CD14-positive monocyte (primary cell): ENCODE measurements at regions of chr12 and their contacts with region 1.

Region 1: DNA sequence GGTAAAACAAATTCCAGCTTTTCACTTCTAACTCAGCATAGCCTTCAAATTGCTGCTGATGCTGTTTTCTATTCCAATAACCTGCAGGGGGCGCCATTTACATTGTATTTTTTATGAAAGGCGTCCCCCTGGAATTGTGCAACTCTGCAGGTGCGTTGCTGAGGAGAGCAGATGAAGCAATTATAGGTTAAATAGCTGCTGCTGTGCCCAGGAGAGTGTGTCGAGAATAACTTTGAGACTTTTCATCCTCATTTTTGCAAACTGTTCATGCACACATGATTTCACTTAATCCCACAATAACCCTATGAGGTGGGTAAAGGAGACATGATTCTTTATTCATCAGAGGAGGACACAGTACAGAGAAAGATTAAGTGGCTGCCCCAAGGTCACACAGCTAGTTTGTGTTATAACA is 75.7 kb downstream of the MYRFL start:
- DNase-seq: peak; percentile 41 to 61 (median 53)
- H3K4me3 ChIP-seq: no peak overlapping the region
- H3K4me3 Mint-ChIP-seq: no peak overlapping the region
- H3K27ac ChIP-seq: no peak overlapping the region
- H3K27ac Mint-ChIP-seq: peak overlapping the region in 1 of 7 donors; percentile 55
- H3K4me1 ChIP-seq: peaks cover 6 to 9% of the 10 kb centered on the region in 2 donors
- H3K4me1 Mint-ChIP-seq: peaks cover 6% of the 10 kb centered on the region
- H3K27me3 ChIP-seq: no peaks in the 10 kb centered on the region
- H3K27me3 Mint-ChIP-seq: peaks cover 0 to 2% (median 0%) of the 10 kb centered on the region in 3 donors
- CTCF ChIP-seq: peak; percentile 97

Region 2: GRCh38 chr12:70070494-70071007 is 169.8 kb after region 1 on chr12:
- intact Hi-C with region 1: loop called in 1 of 2 experiments (anchors 10 kb)
- DNase-seq: no peak
- H3K4me3 ChIP-seq: no peak overlapping the region
- H3K4me3 Mint-ChIP-seq: no peak overlapping the region
- H3K27ac ChIP-seq: no peak overlapping the region
- H3K27ac Mint-ChIP-seq: no peak overlapping the region
- H3K4me1 ChIP-seq: no peaks in the 10 kb centered on the region
- H3K4me1 Mint-ChIP-seq: no peaks in the 10 kb centered on the region
- H3K27me3 ChIP-seq: no peaks in the 10 kb centered on the region
- H3K27me3 Mint-ChIP-seq: peaks cover 0 to 2% (median 0%) of the 10 kb centered on the region in 3 donors
- CTCF ChIP-seq: no peak

Region 3: DNA sequence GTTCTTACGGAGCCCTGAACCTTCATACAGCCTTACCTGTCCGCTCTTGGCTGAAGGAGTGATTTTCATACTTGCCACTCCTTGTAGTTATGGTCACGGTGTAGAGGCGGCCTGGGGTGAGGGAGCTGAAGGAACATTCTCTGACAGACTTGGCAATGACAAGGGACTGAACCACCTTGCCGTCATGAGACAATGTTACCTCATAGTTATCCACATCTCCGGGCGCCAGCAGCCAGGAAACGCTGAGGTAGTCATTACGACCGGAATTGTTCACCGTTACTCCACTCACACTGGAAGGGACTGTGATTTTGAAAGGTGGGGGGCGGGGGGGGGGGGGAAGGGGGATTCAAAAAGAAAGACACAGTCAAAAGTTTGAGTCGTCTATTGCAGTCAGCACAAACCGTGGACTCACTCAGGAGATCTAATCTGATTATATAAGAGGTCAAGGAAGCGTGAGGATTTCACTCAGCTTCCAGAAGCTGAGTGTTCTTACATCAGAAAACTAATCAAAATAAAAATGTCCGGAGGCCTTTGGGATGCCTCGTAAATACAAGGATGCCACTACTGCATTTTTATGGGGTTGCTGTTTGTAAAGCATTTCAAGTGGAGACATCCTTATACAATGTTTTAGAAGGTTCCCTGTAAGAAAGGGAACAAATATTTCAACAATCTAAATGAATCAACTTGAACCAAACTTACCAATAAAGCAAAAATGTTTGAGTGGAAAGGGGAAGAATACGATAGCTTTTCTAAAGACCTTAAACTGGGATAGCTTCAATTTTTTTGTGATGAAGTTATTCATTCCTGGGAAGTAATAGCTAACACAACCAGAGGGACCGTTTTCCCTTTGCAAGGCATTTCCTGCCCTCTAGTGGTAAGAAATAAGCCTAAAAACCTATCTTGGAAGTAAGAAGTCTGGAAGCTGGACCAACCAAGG is 675.9 kb after region 1 on chr12:
- intact Hi-C with region 1: loop called in 1 of 2 experiments (anchors 10 kb)
- DNase-seq: peak; percentile 21 to 47 (median 40)
- H3K4me3 ChIP-seq: no peak overlapping the region
- H3K4me3 Mint-ChIP-seq: no peak overlapping the region
- H3K27ac ChIP-seq: no peak overlapping the region
- H3K27ac Mint-ChIP-seq: no peak overlapping the region
- H3K4me1 ChIP-seq: no peaks in the 10 kb centered on the region
- H3K4me1 Mint-ChIP-seq: no peaks in the 10 kb centered on the region
- H3K27me3 ChIP-seq: no peaks in the 10 kb centered on the region
- H3K27me3 Mint-ChIP-seq: no peaks in the 10 kb centered on the region
- CTCF ChIP-seq: peak; percentile 78